H1 (cell line): ENCODE measurements at regions of chr10 and their contacts with region 1.

Region 1: DNA sequence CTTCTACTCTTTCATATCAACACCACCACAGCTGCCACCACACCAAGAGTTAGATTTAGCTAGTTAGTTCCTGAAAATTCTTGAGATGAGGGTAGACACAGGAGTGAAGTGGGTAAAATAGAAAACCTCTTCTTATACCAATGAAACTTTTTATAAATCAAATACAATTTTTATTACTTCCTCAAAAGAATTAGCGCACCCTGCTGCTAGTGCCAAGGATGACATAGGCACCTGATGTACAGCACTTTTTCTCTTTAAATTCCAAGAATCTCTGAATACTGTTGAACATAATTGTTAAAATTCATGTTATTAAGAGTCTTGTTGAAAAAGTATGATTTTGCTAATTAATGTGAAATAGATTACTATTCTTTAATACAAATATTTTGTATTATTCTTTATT is 11.4 kb downstream of the ZWINT start:
- DNase-seq: no peak
- H3K4me3 ChIP-seq: no peak overlapping the region
- H3K27ac ChIP-seq: no peak overlapping the region
- H3K4me1 ChIP-seq: no peaks in the 10 kb centered on the region
- H3K27me3 ChIP-seq: no peaks in the 10 kb centered on the region
- CTCF ChIP-seq: no peak
- EP300 ChIP-seq: no peak
- POLR2A ChIP-seq: no peak
- RAD21 ChIP-seq: no peak

Region 2: DNA sequence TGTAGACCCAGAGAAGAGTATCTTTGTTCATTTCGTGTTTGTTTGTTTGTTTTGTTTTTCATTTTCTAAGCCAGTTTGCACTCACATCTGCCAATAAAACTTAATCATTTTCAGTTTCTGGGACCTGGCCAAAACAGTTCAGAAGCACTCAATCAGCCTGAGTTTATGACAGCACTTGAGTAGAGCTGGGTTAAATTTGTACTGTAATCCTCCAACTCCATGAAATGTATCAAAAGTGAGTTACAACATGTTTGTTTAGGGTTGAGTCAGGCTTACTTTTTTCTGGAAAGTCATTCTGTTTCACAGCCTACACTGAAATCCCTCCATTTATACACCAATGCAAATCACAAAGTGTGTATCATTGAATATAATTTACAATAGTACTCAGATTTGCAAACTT is 80.4 kb before region 1 on chr10:
- CTCF ChIA-PET with region 1: no interaction called
- POLR2A ChIA-PET with region 1: no interaction called
- DNase-seq: no peak
- H3K4me3 ChIP-seq: no peak overlapping the region
- H3K27ac ChIP-seq: no peak overlapping the region
- H3K4me1 ChIP-seq: no peaks in the 10 kb centered on the region
- H3K27me3 ChIP-seq: no peaks in the 10 kb centered on the region
- CTCF ChIP-seq: no peak
- EP300 ChIP-seq: no peak
- POLR2A ChIP-seq: no peak
- RAD21 ChIP-seq: no peak

Region 3: DNA sequence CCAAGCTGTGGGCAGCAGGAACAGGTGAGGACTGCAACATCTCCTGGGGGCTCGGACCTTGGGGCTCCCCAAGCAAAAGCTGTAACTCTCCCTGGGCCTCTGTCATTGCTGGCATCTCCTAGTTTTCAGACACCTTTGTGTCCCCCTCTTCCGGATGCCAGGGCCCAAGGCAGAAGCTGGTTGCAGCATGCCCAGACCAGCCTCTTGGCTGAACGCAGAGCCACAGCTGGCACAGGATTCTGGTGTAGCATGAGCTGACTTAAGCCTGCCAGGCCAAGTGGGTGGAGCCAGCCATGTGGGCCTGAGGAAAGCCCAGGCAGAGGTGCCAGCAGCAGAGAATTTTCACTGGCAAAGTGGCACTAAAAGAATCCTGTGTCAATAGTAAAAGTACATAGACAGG is 32.0 kb before region 1 on chr10:
- CTCF ChIA-PET with region 1: no interaction called
- POLR2A ChIA-PET with region 1: no interaction called
- DNase-seq: no peak
- H3K4me3 ChIP-seq: no peak overlapping the region
- H3K27ac ChIP-seq: no peak overlapping the region
- H3K4me1 ChIP-seq: no peaks in the 10 kb centered on the region
- H3K27me3 ChIP-seq: no peaks in the 10 kb centered on the region
- CTCF ChIP-seq: no peak
- EP300 ChIP-seq: no peak
- POLR2A ChIP-seq: no peak
- RAD21 ChIP-seq: no peak

Region 4: GRCh38 chr10:56360967-56361612 is 11.5 kb after region 1 on chr10 and contains the start of gene ZWINT:
- CTCF ChIA-PET with region 1: interaction called, 6 read pairs
- POLR2A ChIA-PET with region 1: interaction called, 13 read pairs
- DNase-seq: peak; percentile 89
- H3K4me3 ChIP-seq: peak within 1 kb of the TSS; percentile 96 to 99 (median 98)
- H3K27ac ChIP-seq: peak within 1 kb of the TSS; percentile 91
- H3K4me1 ChIP-seq: peaks cover 0 to 9% (median 3%) of the 10 kb centered on the region in 4 experiments; a peak in 5 of 7 replicates
- H3K27me3 ChIP-seq: no peaks in the 10 kb centered on the region
- CTCF ChIP-seq: no peak
- EP300 ChIP-seq: no peak
- POLR2A ChIP-seq: peak; percentile 89 to 98
- RAD21 ChIP-seq: no peak
- total RNA-seq, gene ZWINT: 71.2 and 73.4 TPM in 2 replicates